ENCODE measurements at regions of chr1 and their contacts with region 1.

Region 1: DNA sequence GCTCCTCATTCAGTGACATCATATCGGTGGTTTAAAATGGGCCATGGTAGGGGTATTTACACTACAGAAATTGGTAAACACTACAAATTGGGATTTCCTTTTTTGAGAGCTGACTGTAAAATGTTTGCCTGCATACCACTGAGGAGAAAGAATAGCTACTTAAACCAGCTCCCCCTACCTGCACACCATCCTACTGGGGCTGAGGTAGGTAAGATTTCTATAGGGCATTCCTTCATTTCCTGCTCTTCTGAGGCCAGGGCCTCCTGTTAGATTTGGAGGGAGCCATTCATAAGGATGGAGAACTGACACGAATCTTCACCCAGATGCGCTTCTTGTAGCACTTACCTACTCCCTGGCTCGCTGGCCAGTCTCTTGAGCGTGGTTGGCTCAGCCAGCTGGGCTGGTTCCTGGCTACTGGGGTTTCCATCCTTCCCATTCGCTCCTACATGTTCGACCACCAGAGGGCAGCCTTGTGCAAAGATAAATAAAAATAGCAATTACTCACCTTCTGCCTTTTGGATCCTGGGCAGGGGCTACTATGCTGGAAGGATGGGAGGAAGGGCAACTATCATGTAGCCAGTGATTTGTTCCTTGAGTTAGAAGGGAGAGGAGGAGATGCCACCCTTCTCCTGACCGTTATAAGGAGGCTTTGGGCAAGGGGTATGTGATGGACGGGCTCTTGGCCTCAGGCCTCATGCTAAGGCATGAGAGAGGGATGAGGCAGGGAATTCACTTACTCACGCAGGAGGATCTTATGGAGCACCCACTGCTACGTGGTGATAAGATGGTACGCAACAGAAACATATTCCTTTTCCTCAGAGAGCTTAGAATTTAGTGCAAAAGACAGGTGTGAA is 10.7 kb downstream of the OPTC start:
- DNase-seq: peak; percentile 68
- H3K4me3 ChIP-seq: no peak overlapping the region
- H3K27ac ChIP-seq: no peak overlapping the region
- H3K4me1 ChIP-seq: no peaks in the 10 kb centered on the region
- H3K27me3 ChIP-seq: no peaks in the 10 kb centered on the region
- CTCF ChIP-seq: peak; percentile 64 to 71

Region 2: GRCh38 chr1:203395751-203396150 is 108.9 kb before region 1 on chr1:
- CTCF ChIA-PET with region 1: no interaction called
- dilution Hi-C with region 1: no loop called
- in situ Hi-C with region 1: no loop called
- intact Hi-C with region 1: no loop called
- DNase-seq: no peak
- H3K4me3 ChIP-seq: no peak overlapping the region
- H3K27ac ChIP-seq: no peak overlapping the region
- H3K4me1 ChIP-seq: no peaks in the 10 kb centered on the region
- H3K27me3 ChIP-seq: peaks cover 4% of the 10 kb centered on the region
- CTCF ChIP-seq: no peak

Region 3: DNA sequence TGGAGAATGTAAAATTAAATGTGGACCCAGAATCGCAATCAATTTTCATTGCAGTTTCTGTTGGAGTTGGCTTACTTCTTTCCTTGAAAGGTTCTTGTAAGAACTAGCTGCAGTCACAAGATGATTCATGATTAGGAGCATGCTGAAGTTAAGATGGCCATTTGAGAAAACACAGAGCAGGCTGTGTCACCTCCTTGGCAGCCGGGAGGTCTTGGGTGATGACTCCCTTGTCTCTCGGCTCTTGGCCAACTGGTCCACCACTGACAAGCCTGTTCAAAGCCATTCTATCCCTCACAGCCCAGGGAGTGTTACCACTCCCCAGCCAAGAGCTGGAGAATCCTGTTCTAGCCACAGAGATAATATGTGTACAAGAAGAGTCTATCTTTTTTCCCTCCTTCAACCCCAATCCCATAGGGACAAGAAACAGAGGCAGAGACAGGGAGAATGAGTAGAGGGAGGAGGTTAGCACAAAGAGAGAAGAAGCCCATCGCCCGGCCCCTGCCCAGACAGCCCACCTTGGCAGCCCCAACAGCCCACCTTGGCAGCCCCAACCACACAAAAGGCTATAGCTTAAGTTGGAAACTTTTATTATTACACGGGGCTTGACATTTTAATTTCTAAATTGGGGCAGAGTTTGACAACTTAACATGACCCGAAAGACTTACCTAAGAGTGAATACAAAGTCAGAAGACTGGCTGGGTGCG is 30.1 kb after region 1 on chr1:
- CTCF ChIA-PET with region 1: no interaction called
- dilution Hi-C with region 1: no loop called
- in situ Hi-C with region 1: no loop called
- intact Hi-C with region 1: no loop called
- DNase-seq: peak; percentile 98
- H3K4me3 ChIP-seq: no peak overlapping the region
- H3K27ac ChIP-seq: peak overlapping the region; percentile 69
- H3K4me1 ChIP-seq: peaks cover 40% of the 10 kb centered on the region
- H3K27me3 ChIP-seq: no peaks in the 10 kb centered on the region
- CTCF ChIP-seq: no peak

Region 4: GRCh38 chr1:203549309-203549708 is 44.7 kb after region 1 on chr1:
- CTCF ChIA-PET with region 1: no interaction called
- dilution Hi-C with region 1: loop called (anchors 5 kb)
- in situ Hi-C with region 1: no loop called
- intact Hi-C with region 1: no loop called
- DNase-seq: peak; percentile 60
- H3K4me3 ChIP-seq: no peak overlapping the region
- H3K27ac ChIP-seq: no peak overlapping the region
- H3K4me1 ChIP-seq: peaks cover 15% of the 10 kb centered on the region
- H3K27me3 ChIP-seq: no peaks in the 10 kb centered on the region
- CTCF ChIP-seq: no peak

Region 5: GRCh38 chr1:203600782-203601736 is 96.4 kb after region 1 on chr1:
- CTCF ChIA-PET with region 1: no interaction called
- dilution Hi-C with region 1: loop called (anchors 5 kb)
- in situ Hi-C with region 1: no loop called
- intact Hi-C with region 1: no loop called
- DNase-seq: no peak
- H3K4me3 ChIP-seq: no peak overlapping the region
- H3K27ac ChIP-seq: no peak overlapping the region
- H3K4me1 ChIP-seq: peaks cover 13% of the 10 kb centered on the region
- H3K27me3 ChIP-seq: no peaks in the 10 kb centered on the region
- CTCF ChIP-seq: no peak

Region 6: DNA sequence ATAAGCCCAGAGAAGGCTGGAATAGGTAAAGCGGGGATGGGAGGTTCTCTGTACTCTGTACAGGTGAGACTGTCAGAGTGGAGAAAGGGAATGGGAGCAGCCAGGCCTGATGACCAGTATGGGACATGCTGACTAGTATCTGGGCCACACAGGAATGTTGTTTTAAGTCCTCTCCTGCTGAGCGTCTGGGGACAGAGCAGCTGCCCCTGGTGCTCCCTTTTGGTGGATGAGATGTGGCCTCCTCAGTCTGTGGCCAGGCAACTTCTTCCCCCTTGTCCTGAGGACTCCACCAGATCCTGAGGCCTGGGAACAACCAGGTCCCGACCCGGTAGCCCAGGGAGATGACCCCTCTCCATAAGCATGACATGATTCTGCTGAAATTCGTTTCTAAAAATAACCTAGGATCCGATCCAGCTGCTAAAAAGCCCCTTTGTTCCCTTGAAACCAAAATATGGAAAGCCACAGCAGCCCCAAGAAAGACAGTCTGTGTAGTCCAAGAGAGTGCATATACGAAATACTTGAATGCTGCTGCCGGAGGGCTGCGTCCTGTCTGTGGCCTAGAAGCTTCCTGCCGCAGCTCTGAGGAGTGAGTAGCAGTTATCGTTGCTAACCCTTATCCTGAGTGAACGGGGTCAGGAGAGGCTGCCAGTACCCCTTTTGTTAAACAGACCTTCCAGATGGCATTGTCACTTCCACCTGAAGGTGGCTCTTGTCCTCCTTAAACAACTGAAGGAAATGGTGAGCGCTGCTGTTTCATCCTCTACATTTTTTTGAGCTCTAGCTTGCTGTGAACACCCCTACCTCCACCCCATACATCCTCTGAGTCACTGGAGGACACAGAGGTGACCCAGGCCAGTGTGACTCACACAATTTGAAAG is 169.2 kb after region 1 on chr1:
- CTCF ChIA-PET with region 1: interaction called, 4 read pairs
- dilution Hi-C with region 1: loop called (anchors 10 kb)
- in situ Hi-C with region 1: no loop called
- intact Hi-C with region 1: no loop called
- DNase-seq: peak; percentile 96
- H3K4me3 ChIP-seq: no peak overlapping the region
- H3K27ac ChIP-seq: peak overlapping the region; percentile 86
- H3K4me1 ChIP-seq: peaks cover 37% of the 10 kb centered on the region
- H3K27me3 ChIP-seq: no peaks in the 10 kb centered on the region
- CTCF ChIP-seq: peak in 1 of 2 donors; percentile 49

Region 7: DNA sequence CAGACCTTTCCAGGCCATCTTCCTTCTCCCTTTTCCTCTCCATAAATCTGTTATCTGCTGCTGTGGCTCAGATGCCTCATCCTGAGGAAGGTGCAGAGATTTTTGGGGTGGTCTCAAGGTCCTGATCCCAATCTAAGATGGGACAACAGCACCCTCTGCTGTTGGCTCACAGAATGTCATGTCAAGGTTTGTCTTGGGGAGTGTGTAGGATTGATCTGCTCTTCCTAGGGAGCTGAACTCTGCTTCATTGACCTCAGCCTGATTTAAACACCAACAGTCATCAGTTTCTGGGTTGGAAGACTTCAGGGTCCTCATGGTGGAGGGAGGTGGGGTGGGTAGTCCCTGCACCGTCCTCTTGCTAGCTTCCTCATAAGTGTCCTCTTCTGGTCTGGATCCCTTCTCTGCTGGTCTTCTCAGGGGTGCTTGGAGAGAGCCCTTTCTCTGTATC is 197.5 kb after region 1 on chr1:
- CTCF ChIA-PET with region 1: interaction called, 5 read pairs
- dilution Hi-C with region 1: loop called (anchors 5 kb)
- in situ Hi-C with region 1: loop called (anchors 5 kb)
- intact Hi-C with region 1: loop called (anchors 1 kb)
- DNase-seq: peak; percentile 37
- H3K4me3 ChIP-seq: no peak overlapping the region
- H3K27ac ChIP-seq: no peak overlapping the region
- H3K4me1 ChIP-seq: peaks cover 18% of the 10 kb centered on the region
- H3K27me3 ChIP-seq: no peaks in the 10 kb centered on the region
- CTCF ChIP-seq: peak; percentile 79 to 80

Region 8: GRCh38 chr1:203795441-203796235 is 291.0 kb after region 1 on chr1 and contains the starts of genes ZBED6 and ZC3H11A:
- CTCF ChIA-PET with region 1: no interaction called
- dilution Hi-C with region 1: no loop called
- in situ Hi-C with region 1: loop called in 1 of 2 experiments (anchors 25 kb)
- intact Hi-C with region 1: loop called (anchors 2 kb)
- DNase-seq: peak; percentile 99
- H3K4me3 ChIP-seq: peak within 1 kb of the TSS; percentile 46 to 84 (median 67)
- H3K27ac ChIP-seq: peak within 1 kb of the TSS; percentile 94
- H3K4me1 ChIP-seq: peaks cover 25% of the 10 kb centered on the region
- H3K27me3 ChIP-seq: no peaks in the 10 kb centered on the region
- CTCF ChIP-seq: no peak
- total RNA-seq, gene ZBED6: 28.8 to 32.3 TPM
- total RNA-seq, gene ZC3H11A: 77.7 to 91.5 TPM